Gastrocnemius medialis (tissue), 4 donors: ENCODE measurements at regions of chr6 and their contacts with region 1.

Region 1: GRCh38 chr6:150250826-150251225 is 108.0 kb downstream of the PPP1R14C start:
- DNase-seq: peak; percentile 57 to 85
- ATAC-seq: peak; percentile 33 to 57
- H3K4me3 ChIP-seq: no peak overlapping the region
- H3K27ac ChIP-seq: peak overlapping the region; percentile 79 to 89 (median 84)
- H3K4me1 ChIP-seq: peaks cover 61 to 67% of the 10 kb centered on the region in 2 donors
- H3K27me3 ChIP-seq: no peaks in the 10 kb centered on the region
- CTCF ChIP-seq: no peak
- POLR2A ChIP-seq: no peak

Region 2: GRCh38 chr6:150142670-150143515 is 107.9 kb before region 1 on chr6 and contains the start of gene PPP1R14C:
- in situ Hi-C with region 1: no loop called
- intact Hi-C with region 1: loop called (anchors 1 kb)
- DNase-seq: peak in 1 of 2 donors; percentile 30
- ATAC-seq: peak; percentile 68 to 72
- H3K4me3 ChIP-seq: peak within 1 kb of the TSS; percentile 64 to 71 (median 67)
- H3K27ac ChIP-seq: peak within 1 kb of the TSS; percentile 69 to 83 (median 76)
- H3K4me1 ChIP-seq: peaks cover 25 to 36% of the 10 kb centered on the region in 2 donors
- H3K27me3 ChIP-seq: peaks cover 0 to 15% (median 5%) of the 10 kb centered on the region in 3 donors
- CTCF ChIP-seq: no peak
- POLR2A ChIP-seq: peak; percentile 55 to 66
- total RNA-seq, gene PPP1R14C: 14.9 to 37.0 (median 21.7) TPM

Region 3: GRCh38 chr6:150195996-150196417 is 54.8 kb before region 1 on chr6:
- in situ Hi-C with region 1: no loop called
- intact Hi-C with region 1: loop called (anchors 1 kb)
- DNase-seq: peak; percentile 55 to 61
- ATAC-seq: peak; percentile 98
- H3K4me3 ChIP-seq: no peak overlapping the region
- H3K27ac ChIP-seq: peak overlapping the region; percentile 45 to 79 (median 74)
- H3K4me1 ChIP-seq: peaks cover 18 to 25% of the 10 kb centered on the region in 2 donors
- H3K27me3 ChIP-seq: no peaks in the 10 kb centered on the region
- CTCF ChIP-seq: no peak
- POLR2A ChIP-seq: no peak

Region 4: DNA sequence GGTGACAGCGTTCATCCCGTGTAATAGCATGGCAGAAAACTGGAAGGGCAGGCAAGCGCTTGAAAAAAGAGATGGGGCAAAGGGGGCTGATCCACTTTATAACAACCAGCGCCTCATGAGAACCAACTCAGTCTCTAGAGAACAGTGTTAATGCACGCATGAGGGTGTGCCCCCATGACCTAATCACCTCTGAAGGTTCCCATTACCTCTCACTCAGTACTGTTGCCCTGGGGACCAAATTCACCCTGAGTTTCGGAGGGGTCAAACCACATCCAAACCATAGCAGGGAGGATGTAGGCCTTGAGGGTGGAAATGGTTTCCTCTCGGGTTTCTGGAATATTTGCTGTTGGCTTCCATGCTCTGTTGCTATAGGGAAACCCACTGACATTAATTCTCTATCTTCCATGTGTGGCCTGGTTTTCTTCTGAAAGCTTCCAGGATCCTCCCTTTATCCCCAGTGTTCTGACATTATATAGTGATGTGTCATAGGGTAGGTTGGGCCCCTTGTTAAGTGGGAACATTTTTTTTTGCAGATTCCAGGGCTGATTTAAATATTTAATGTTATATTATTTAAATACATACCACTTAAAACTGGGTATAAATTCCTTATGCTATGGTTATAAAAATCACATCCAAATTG is 42.8 kb before region 1 on chr6:
- in situ Hi-C with region 1: no loop called
- intact Hi-C with region 1: loop called (anchors 2 kb)
- DNase-seq: no peak
- ATAC-seq: no peak
- H3K4me3 ChIP-seq: no peak overlapping the region
- H3K27ac ChIP-seq: peak overlapping the region; percentile 66 to 81 (median 74)
- H3K4me1 ChIP-seq: peaks cover 10 to 20% of the 10 kb centered on the region in 2 donors
- H3K27me3 ChIP-seq: no peaks in the 10 kb centered on the region
- CTCF ChIP-seq: no peak
- POLR2A ChIP-seq: no peak

Region 5: DNA sequence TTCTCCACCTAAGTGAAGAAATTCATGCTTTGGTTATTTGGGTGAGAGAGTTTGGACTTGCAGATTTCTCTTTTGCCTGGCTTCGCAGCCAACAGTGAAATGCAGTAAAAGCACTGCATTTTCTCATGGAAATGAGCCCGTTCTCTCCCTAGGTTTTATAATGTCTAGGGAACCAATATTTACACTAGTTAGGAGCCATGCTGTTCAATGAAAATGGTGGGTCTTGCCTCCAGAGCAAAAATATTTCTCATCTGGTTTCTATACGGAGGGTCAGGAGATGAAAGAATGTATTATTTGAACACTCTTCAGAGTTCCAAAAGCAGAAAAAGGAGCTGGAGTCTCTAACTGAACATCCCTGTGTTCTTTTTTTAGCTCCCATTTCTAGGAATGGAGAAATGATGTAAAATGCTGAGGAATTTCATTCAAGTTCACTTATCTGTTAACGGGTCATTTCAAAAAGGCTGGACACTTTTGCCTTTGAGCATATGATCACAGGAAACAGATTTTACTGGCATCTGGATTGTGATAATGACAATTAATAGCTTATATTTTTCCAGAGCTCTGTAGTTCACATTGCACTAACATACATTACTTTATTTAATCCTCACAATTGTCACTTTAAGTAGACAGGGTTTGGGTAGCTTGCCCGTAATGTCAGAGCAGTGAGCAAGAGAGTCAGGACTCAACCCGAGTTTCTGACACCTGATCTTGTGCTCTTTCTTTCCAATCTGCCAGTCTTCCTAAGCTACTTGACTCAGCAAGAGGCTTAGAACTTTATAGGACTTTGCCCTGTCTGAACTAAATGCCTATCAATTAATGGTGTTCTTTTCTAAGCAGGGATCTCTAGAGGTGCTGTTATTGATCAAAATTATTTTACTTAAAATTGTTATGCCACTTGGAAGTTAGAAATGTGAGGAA is 29.9 kb before region 1 on chr6:
- in situ Hi-C with region 1: no loop called
- intact Hi-C with region 1: loop called (anchors 2 kb)
- DNase-seq: peak in 1 of 2 donors; percentile 25
- ATAC-seq: peak; percentile 98 to 100
- H3K4me3 ChIP-seq: no peak overlapping the region
- H3K27ac ChIP-seq: peak overlapping the region; percentile 30 to 76 (median 56)
- H3K4me1 ChIP-seq: peaks cover 15 to 18% of the 10 kb centered on the region in 2 donors
- H3K27me3 ChIP-seq: no peaks in the 10 kb centered on the region
- CTCF ChIP-seq: no peak
- POLR2A ChIP-seq: no peak

Region 6: DNA sequence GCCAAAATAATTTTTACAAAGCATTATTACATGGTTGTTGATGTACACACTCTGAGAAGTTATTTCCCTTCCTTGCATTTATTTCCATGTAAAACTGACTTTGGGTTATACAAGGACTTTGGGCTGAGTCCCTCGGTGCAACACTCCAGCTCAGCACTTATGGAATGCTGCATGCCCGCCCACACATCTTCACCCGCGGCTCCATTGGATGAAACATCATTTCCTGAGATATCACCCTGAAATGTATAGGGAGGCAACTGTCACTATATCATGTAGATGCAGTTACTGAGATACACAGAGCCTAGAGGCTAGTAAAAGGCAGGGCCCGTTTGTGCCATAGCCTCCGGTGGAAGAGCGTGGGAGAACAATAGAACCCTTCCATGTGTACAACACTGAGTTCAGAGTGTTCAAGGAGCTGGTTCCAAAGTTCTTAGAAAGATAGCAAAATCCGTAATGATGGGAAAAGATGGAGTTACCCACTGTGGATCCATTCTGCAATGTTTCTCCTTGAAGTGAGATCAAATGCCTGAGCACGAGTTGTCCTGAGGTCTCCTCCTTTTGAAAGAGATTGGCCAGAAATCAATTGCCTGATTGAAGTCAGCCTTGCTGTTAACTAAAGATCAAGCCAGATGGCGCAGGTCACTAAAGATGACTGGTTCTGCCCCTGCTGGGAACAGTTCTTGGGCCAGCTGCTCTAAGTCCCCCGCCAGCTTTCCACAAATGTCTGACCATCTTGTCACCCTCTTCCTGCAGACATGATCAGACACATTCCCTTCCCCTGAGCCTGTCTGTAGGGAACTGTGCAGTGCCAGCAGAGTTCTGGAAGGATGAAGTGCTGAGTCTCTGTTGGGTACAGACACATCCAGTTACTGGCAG is 17.1 kb after region 1 on chr6:
- in situ Hi-C with region 1: no loop called
- intact Hi-C with region 1: no loop called
- DNase-seq: peak; percentile 77 to 78
- ATAC-seq: peak; percentile 81 to 95
- H3K4me3 ChIP-seq: no peak overlapping the region
- H3K27ac ChIP-seq: peak overlapping the region; percentile 18 to 77 (median 41)
- H3K4me1 ChIP-seq: peaks cover 8 to 30% of the 10 kb centered on the region in 2 donors
- H3K27me3 ChIP-seq: no peaks in the 10 kb centered on the region
- CTCF ChIP-seq: peak in 1 of 5 experiments; percentile 10
- POLR2A ChIP-seq: no peak

Region 7: DNA sequence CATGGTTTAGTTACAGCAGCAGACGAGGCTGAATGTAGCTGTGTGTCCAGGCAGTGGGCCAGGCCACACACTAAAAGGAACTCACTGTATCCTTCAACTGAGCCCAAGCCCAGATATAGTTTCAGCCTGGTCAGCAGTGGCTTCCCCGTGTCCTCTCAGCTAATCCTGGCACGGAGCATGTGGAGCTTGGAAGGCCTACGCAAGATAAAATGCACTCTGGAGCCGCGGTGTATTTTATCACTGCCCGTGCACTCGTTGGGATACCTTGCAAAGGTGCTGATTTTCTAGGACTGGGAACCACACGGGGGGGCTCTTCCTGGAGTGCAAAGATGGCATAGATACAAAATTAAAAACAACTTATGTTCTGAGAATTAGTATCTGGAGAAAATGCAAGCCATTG is 69.6 kb after region 1 on chr6:
- in situ Hi-C with region 1: no loop called
- intact Hi-C with region 1: loop called (anchors 1 kb)
- DNase-seq: peak; percentile 94 to 96
- ATAC-seq: peak; percentile 89 to 90
- H3K4me3 ChIP-seq: no peak overlapping the region
- H3K27ac ChIP-seq: peak overlapping the region; percentile 65 to 93 (median 75)
- H3K4me1 ChIP-seq: peaks cover 42 to 56% of the 10 kb centered on the region in 2 donors
- H3K27me3 ChIP-seq: no peaks in the 10 kb centered on the region
- CTCF ChIP-seq: no peak
- POLR2A ChIP-seq: no peak